Activated B cell treated with CpG ODN at 0.5 μM for 24 hours (primary cell): ENCODE measurements at regions of chr6 and their contacts with region 1.

Region 1: DNA sequence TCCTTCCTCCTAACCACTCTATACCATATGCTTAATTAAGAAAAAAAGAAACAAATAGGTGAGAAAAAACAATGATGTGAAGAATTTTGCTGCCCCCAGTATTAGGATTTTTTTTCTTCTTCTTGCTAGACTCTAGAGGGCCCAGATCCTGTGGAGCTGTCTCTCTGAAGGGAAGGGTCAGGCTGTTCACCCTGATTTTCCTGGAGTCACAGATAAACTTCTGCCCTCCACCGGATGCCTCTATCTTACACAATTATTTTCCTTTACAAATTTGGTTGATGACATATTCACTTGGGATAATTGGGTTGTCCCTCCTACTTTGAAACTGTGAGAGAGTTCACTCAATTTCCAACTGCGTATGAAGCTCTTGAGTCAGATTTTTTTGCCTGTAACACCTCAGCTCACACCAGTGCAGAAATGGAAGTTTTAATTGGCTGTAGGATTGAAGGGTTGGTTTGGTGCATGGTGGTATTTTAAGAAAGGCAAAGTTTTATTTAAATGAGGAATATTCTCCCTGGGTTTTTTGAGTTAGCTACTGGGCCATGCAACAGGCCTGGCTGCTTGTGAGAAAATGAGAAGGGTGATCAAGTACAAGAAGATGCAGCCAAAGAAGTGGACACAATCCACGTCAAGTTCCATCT is 73.7 kb upstream of the ESR1 start:
- DNase-seq: no peak
- ATAC-seq: no peak
- H3K4me3 Mint-ChIP-seq: no peak overlapping the region
- H3K27ac Mint-ChIP-seq: no peak overlapping the region
- H3K4me1 Mint-ChIP-seq: no peaks in the 10 kb centered on the region
- H3K27me3 Mint-ChIP-seq: no peaks in the 10 kb centered on the region
- CTCF ChIP-seq: no peak

Region 2: GRCh38 chr6:150959166-150959565 is 774.6 kb before region 1 on chr6:
- CTCF ChIA-PET with region 1: no interaction called
- POLR2A ChIA-PET with region 1: no interaction called
- intact Hi-C with region 1: no loop called
- DNase-seq: no peak
- ATAC-seq: no peak
- H3K4me3 Mint-ChIP-seq: no peak overlapping the region
- H3K27ac Mint-ChIP-seq: no peak overlapping the region
- H3K4me1 Mint-ChIP-seq: no peaks in the 10 kb centered on the region
- H3K27me3 Mint-ChIP-seq: no peaks in the 10 kb centered on the region
- CTCF ChIP-seq: no peak

Region 3: DNA sequence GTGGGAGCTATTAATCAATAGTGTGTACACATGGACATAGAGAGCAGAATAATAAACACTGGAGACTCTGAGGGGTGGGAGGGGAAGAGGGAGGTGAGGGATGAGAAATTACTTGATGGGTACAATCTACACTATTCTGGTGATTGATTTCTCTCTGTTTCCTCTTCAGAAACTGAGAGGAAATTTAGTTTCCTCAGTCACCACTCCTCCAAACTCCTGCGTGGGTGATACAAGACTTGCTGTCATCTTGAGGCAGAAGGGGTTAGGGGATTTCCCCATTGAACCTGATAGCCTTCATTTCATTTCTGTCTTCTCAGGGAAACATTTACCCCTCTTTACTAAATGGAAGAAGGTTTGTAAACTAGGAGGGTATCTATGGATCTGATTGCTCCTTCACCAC is 10.6 kb before region 1 on chr6:
- CTCF ChIA-PET with region 1: no interaction called
- POLR2A ChIA-PET with region 1: interaction called, 3 read pairs
- intact Hi-C with region 1: loop called (anchors 2 kb)
- DNase-seq: no peak
- ATAC-seq: peak; percentile 90
- H3K4me3 Mint-ChIP-seq: peak overlapping the region; percentile 41
- H3K27ac Mint-ChIP-seq: peak overlapping the region; percentile 75
- H3K4me1 Mint-ChIP-seq: peaks cover 32% of the 10 kb centered on the region
- H3K27me3 Mint-ChIP-seq: no peaks in the 10 kb centered on the region
- CTCF ChIP-seq: no peak

Region 4: GRCh38 chr6:152404936-152405595 is 671.3 kb after region 1 on chr6:
- CTCF ChIA-PET with region 1: no interaction called
- POLR2A ChIA-PET with region 1: no interaction called
- intact Hi-C with region 1: no loop called
- DNase-seq: no peak
- ATAC-seq: no peak
- H3K4me3 Mint-ChIP-seq: no peak overlapping the region
- H3K27ac Mint-ChIP-seq: no peak overlapping the region
- H3K4me1 Mint-ChIP-seq: no peaks in the 10 kb centered on the region
- H3K27me3 Mint-ChIP-seq: peaks cover 3% of the 10 kb centered on the region
- CTCF ChIP-seq: no peak